B cell (primary cell): ENCODE measurements at regions of chr19 and their contacts with region 1.

Region 1: DNA sequence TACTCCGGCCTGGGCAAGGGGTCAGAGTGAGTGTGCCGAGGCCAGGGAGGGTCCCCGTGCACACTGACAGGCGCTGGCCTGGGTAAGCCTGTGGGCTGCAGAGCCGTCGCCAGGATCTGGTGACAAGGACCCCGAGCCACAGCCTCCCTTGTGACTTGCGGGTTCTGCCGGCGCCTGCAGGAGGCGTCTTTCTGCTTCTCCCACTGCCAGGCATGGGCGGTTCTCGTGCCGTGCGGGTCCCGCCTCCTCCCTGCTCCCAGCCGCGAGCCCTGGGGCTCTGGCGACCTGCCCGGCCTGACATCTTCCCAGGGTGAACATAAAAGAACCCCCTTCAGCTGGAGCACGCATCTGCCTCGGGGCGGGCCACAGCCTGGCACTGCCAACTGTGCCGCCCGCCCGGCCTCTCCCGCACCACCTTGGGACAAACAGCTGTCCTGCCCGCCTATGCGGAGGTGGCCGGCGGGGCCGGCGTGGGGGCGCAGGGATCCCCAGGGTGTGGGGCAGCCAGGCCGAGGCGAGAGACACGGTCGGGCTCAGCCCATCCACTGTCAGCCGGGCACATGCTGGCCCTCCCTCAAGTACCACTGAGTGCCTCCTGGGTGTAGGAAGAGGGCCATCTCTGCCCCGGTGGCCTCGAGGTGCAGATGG is 1.5 kb upstream of the HCN2 start:
- DNase-seq: peak; percentile 65
- ATAC-seq: peak; percentile 21
- H3K4me3 ChIP-seq: no peak overlapping the region
- H3K4me3 Mint-ChIP-seq: peak overlapping the region; percentile 41
- H3K27ac ChIP-seq: no peak overlapping the region
- H3K27ac Mint-ChIP-seq: no peak overlapping the region
- H3K4me1 ChIP-seq: peaks cover 17% of the 10 kb centered on the region in 2 donors
- H3K4me1 Mint-ChIP-seq: peaks cover 15% of the 10 kb centered on the region
- H3K27me3 ChIP-seq: peaks cover 0 to 53% (median 21%) of the 10 kb centered on the region in 4 experiments
- H3K27me3 Mint-ChIP-seq: peaks cover 16% of the 10 kb centered on the region
- CTCF ChIP-seq: peak; percentile 51

Region 2: DNA sequence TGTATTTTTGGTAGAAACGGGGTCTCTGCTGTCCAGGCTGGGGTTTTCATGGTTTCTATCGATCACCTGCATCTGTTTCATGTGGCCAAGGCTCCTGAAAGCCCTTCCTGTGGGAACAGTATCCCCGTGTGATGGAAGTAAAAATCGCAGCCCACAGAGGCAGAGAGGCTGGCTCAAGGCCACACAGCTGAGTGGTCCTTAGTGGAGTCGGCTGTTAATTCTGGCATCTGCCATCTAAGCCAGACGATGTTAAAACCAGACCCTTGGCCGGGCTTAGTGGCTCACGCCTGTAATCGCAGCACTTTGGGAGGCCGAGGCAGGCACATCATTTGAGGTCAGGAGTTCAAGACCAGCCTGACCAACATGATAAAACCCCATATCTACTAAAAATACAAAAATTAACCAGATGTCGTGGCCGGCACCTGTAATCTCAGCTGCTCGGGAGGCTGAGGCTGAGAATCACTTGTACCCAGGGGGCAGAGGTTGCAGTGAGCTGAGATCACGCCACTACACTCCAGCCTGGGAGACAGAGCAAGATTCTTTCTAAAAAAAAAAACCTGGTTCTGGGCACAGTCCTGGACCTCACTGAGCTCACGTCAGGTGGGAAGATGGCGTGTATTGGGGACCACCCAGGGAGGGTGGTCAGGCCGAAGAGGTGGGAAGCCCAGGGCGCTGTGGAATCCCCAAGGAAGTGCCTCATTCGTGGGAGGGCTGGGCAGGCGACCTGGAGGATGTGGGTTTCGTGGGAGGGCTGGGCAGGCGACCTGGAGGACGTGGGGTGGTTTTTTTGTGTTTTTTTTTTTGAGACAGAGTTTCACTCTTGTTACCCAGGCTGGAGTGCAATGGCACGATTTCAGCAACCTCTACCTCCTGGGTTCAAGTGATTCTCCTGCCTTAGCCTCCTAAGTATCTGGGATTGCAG is 144.2 kb after region 1 on chr19:
- CTCF ChIA-PET with region 1: interaction called, 39 read pairs
- POLR2A ChIA-PET with region 1: no interaction called
- intact Hi-C with region 1: loop called (anchors 1 kb)
- DNase-seq: no peak
- ATAC-seq: no peak
- H3K4me3 ChIP-seq: no peak overlapping the region
- H3K4me3 Mint-ChIP-seq: no peak overlapping the region
- H3K27ac ChIP-seq: no peak overlapping the region
- H3K27ac Mint-ChIP-seq: no peak overlapping the region
- H3K4me1 ChIP-seq: no peaks in the 10 kb centered on the region
- H3K4me1 Mint-ChIP-seq: peaks cover 4% of the 10 kb centered on the region
- H3K27me3 ChIP-seq: peaks cover 0 to 4% (median 0%) of the 10 kb centered on the region in 4 experiments
- H3K27me3 Mint-ChIP-seq: peaks cover 3% of the 10 kb centered on the region
- CTCF ChIP-seq: no peak